Right ventricle myocardium superior (tissue), 1 donor: ENCODE measurements at regions of chr2 and their contacts with region 1.

Region 1: GRCh38 chr2:164044637-164045036 is 308.8 kb upstream of the FIGN start:
- DNase-seq: peak; percentile 64
- ATAC-seq: peak; percentile 98

Region 2: DNA sequence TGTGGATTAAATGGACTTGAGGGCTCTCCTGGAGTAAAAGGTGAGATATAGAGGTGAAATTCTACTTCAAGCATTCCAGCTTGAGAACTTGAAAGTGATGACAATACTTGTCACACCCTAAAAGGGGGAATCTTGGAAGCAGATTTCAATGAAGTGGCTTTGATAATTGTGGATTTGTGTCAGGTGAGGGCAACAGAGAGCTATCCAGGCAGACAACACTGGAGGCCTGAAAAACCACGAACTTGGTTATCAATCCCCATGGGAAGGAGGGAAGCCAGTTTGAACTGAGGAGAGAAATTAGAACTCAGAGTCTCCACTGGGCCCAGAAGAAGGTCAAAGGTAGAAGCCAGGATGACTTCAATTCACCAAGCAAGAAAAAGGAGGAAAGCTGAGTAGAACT is 572.7 kb before region 1 on chr2:
- intact Hi-C with region 1: loop called (anchors 10 kb)
- DNase-seq: no peak
- ATAC-seq: peak; percentile 62

Region 3: DNA sequence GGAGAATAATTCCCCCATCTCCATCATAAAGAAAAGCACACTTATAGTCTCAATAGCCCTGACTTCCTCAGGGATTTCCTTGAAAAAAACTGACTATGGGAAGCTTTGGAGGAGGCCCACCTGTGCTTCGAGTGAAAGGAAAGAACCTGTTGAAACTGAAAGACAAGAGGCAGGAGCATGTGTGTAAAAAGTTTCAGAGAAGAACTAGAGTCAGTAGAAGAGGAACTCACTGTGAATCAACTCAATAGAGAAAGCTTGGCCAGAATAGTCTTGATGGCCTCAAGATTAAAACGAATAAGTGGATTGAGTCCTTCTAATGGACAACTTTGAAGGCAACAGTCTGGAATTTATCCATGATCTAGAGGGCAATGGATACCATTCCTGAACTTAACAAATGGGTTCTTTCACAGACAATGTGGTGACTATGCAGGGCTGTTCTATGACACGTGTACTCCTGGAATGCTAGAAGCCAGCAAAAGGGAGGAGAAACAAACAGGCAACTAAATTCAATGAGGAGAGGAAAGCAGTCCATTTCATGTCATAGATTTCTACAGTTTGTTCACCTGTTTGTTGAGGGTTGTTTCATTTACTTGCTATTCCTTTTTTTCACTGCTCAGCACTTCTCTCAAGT is 134.3 kb after region 1 on chr2:
- intact Hi-C with region 1: no loop called
- DNase-seq: no peak
- ATAC-seq: no peak

Region 4: GRCh38 chr2:164252568-164253287 is 208.1 kb after region 1 on chr2:
- intact Hi-C with region 1: no loop called
- DNase-seq: no peak
- ATAC-seq: no peak